HCT116 (cell line): ENCODE measurements at regions of chr1 and their contacts with region 1.

Region 1: GRCh38 chr1:55375617-55376258 is 160.6 kb upstream of the USP24 start:
- DNase-seq: peak; percentile 22
- ATAC-seq: peak; percentile 78
- H3K4me3 ChIP-seq: no peak overlapping the region
- H3K27ac ChIP-seq: no peak overlapping the region
- H3K4me1 ChIP-seq: peaks cover 0 to 20% of the 10 kb centered on the region in 2 experiments; a peak in 1 of 4 replicates
- H3K27me3 ChIP-seq: no peaks in the 10 kb centered on the region
- CTCF ChIP-seq: peak; percentile 56 to 94 (median 89); a peak in 5 of 6 replicates
- POLR2A ChIP-seq: no peak
- RAD21 ChIP-seq: peak; percentile 76

Region 2: DNA sequence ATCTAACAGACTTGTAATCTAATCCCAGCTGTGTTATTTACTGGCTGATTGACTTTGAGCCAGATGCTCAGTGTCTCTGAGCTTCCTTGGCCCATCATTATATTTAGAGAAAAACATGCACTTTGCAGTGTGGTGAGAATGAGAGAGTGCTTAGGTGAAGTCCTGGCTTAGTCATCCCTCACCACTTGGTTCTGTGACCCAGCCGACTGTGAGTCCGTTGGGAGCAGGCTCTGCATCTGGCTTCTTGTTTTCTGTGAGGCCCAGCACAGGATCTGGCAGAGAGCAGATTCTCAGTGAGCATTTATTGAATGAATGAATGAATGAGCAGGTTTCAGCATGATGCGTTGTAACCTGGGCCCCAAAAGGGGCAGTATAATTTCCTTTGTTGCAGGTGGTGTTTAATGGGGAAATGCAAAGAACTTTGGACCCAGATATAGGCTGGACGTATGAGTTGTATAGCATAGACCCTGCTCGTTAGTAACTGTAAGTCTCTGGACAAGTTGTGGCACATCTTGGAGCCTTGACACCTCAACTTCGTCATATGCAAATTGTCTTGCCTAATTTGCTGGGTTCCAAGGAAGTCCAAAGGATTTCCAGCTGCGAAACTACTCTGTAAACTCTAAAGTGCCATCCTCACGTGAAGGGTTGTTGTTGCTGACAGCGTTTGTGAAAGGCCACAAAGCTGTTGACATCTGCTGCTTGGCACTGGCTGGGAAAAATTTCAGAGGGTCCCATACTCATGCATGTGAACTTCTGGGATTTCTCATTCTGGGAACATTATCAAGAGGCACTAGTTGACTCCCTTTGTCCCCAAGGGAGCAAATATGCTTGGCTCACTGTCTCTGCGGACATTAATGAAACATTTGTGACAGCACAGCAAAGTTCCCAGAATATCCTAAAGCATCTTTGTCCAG is 21.8 kb before region 1 on chr1:
- CTCF ChIA-PET with region 1: interaction called, 10 read pairs
- POLR2A ChIA-PET with region 1: no interaction called
- RAD21 ChIA-PET with region 1: no interaction called
- intact Hi-C with region 1: no loop called
- DNase-seq: no peak
- ATAC-seq: no peak
- H3K4me3 ChIP-seq: no peak overlapping the region
- H3K27ac ChIP-seq: no peak overlapping the region
- H3K4me1 ChIP-seq: no peaks in the 10 kb centered on the region
- H3K27me3 ChIP-seq: no peaks in the 10 kb centered on the region
- CTCF ChIP-seq: no peak
- POLR2A ChIP-seq: no peak
- RAD21 ChIP-seq: no peak

Region 3: GRCh38 chr1:55428944-55429931 is 53.5 kb after region 1 on chr1:
- CTCF ChIA-PET with region 1: interaction called, 10 read pairs
- POLR2A ChIA-PET with region 1: no interaction called
- RAD21 ChIA-PET with region 1: interaction called in 1 of 2 experiments, 3 read pairs
- intact Hi-C with region 1: no loop called
- DNase-seq: peak; percentile 100
- ATAC-seq: peak; percentile 95
- H3K4me3 ChIP-seq: peak overlapping the region in 1 of 2 experiments; percentile 27; a peak in 3 of 4 replicates
- H3K27ac ChIP-seq: peak overlapping the region; percentile 51
- H3K4me1 ChIP-seq: peaks cover 22 to 64% of the 10 kb centered on the region in 2 experiments
- H3K27me3 ChIP-seq: no peaks in the 10 kb centered on the region
- CTCF ChIP-seq: no peak
- POLR2A ChIP-seq: no peak
- RAD21 ChIP-seq: peak; percentile 35; the same call in 1 of the 2 replicates

Region 4: GRCh38 chr1:55478742-55479141 is 103.0 kb after region 1 on chr1:
- CTCF ChIA-PET with region 1: interaction called, 16 read pairs
- POLR2A ChIA-PET with region 1: no interaction called
- RAD21 ChIA-PET with region 1: interaction called, 3 to 5 read pairs
- intact Hi-C with region 1: loop called (anchors 5 kb)
- DNase-seq: peak; percentile 15
- ATAC-seq: peak; percentile 62
- H3K4me3 ChIP-seq: no peak overlapping the region
- H3K27ac ChIP-seq: no peak overlapping the region
- H3K4me1 ChIP-seq: peaks cover 0 to 12% of the 10 kb centered on the region in 2 experiments; a peak in 1 of 4 replicates
- H3K27me3 ChIP-seq: no peaks in the 10 kb centered on the region
- CTCF ChIP-seq: peak in 2 of 3 experiments; percentile 53 to 54; a peak in 3 of 6 replicates
- POLR2A ChIP-seq: no peak
- RAD21 ChIP-seq: peak; percentile 66

Region 5: GRCh38 chr1:55572878-55573734 is 197.4 kb after region 1 on chr1:
- CTCF ChIA-PET with region 1: no interaction called
- POLR2A ChIA-PET with region 1: no interaction called
- RAD21 ChIA-PET with region 1: no interaction called
- intact Hi-C with region 1: no loop called
- DNase-seq: peak; percentile 16
- ATAC-seq: peak; percentile 83
- H3K4me3 ChIP-seq: no peak overlapping the region
- H3K27ac ChIP-seq: no peak overlapping the region
- H3K4me1 ChIP-seq: peaks cover 4 to 18% of the 10 kb centered on the region in 2 experiments; a peak in 3 of 4 replicates
- H3K27me3 ChIP-seq: no peaks in the 10 kb centered on the region
- CTCF ChIP-seq: no peak
- POLR2A ChIP-seq: no peak
- RAD21 ChIP-seq: no peak

Region 6: GRCh38 chr1:55604749-55605148 is 229.0 kb after region 1 on chr1:
- CTCF ChIA-PET with region 1: no interaction called
- POLR2A ChIA-PET with region 1: no interaction called
- RAD21 ChIA-PET with region 1: no interaction called
- intact Hi-C with region 1: no loop called
- DNase-seq: no peak
- ATAC-seq: no peak
- H3K4me3 ChIP-seq: no peak overlapping the region
- H3K27ac ChIP-seq: no peak overlapping the region
- H3K4me1 ChIP-seq: no peaks in the 10 kb centered on the region
- H3K27me3 ChIP-seq: no peaks in the 10 kb centered on the region
- CTCF ChIP-seq: no peak
- POLR2A ChIP-seq: no peak
- RAD21 ChIP-seq: no peak

Region 7: GRCh38 chr1:55650444-55650843 is 274.7 kb after region 1 on chr1:
- CTCF ChIA-PET with region 1: no interaction called
- POLR2A ChIA-PET with region 1: no interaction called
- RAD21 ChIA-PET with region 1: no interaction called
- intact Hi-C with region 1: no loop called
- DNase-seq: no peak
- ATAC-seq: no peak
- H3K4me3 ChIP-seq: no peak overlapping the region
- H3K27ac ChIP-seq: no peak overlapping the region
- H3K4me1 ChIP-seq: no peaks in the 10 kb centered on the region
- H3K27me3 ChIP-seq: no peaks in the 10 kb centered on the region
- CTCF ChIP-seq: no peak
- POLR2A ChIP-seq: no peak
- RAD21 ChIP-seq: no peak

Region 8: DNA sequence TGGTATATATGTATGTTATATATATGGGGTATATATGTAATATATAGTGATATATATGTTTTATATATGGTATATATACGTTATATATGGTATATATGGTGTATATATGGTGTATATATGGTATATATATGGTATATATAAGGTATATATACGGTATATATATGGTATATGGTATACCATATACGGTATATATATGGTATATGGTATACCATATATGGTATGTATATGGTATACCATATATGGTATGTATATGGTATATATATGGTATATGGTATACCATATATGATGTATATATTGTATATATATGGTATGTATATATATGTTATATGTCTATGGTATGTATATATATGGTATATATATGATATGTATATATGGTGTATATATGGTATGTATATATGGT is 287.1 kb after region 1 on chr1:
- CTCF ChIA-PET with region 1: no interaction called
- POLR2A ChIA-PET with region 1: no interaction called
- RAD21 ChIA-PET with region 1: no interaction called
- intact Hi-C with region 1: no loop called
- DNase-seq: no peak
- ATAC-seq: no peak
- H3K4me3 ChIP-seq: no peak overlapping the region
- H3K27ac ChIP-seq: no peak overlapping the region
- H3K4me1 ChIP-seq: no peaks in the 10 kb centered on the region
- H3K27me3 ChIP-seq: no peaks in the 10 kb centered on the region
- CTCF ChIP-seq: no peak
- POLR2A ChIP-seq: no peak
- RAD21 ChIP-seq: no peak

Region 9: DNA sequence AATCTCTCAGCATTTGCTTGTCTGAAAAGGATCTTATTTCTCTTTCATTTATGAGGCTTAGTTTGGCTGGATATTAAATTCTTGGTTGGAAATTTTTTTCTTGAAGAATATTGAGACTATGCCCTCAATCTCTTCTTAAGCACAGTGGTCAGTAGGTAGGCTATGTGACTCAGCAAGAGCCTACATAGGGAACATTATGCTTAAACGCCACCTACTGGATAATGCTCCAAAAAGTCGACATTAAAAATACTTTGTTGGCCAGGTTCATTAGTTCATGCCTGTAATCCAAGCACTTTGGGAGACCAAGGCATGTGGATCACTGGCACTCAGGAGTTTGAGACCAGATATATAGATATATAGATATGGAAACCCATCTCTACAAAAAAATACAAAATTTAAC is 517.4 kb after region 1 on chr1:
- CTCF ChIA-PET with region 1: no interaction called
- POLR2A ChIA-PET with region 1: no interaction called
- RAD21 ChIA-PET with region 1: no interaction called
- intact Hi-C with region 1: loop called (anchors 1 kb)
- DNase-seq: peak; percentile 53
- ATAC-seq: peak; percentile 95
- H3K4me3 ChIP-seq: no peak overlapping the region
- H3K27ac ChIP-seq: no peak overlapping the region
- H3K4me1 ChIP-seq: no peaks in the 10 kb centered on the region
- H3K27me3 ChIP-seq: no peaks in the 10 kb centered on the region
- CTCF ChIP-seq: peak; percentile 47 to 59 (median 55); a peak in 5 of 6 replicates
- POLR2A ChIP-seq: no peak
- RAD21 ChIP-seq: peak; percentile 74

Region 10: GRCh38 chr1:56584910-56585528 is 1209.3 kb after region 1 on chr1:
- CTCF ChIA-PET with region 1: interaction called, 6 read pairs
- POLR2A ChIA-PET with region 1: no interaction called
- RAD21 ChIA-PET with region 1: no interaction called
- intact Hi-C with region 1: loop called (anchors 5 kb)
- DNase-seq: peak; percentile 39
- ATAC-seq: peak; percentile 76
- H3K4me3 ChIP-seq: no peak overlapping the region
- H3K27ac ChIP-seq: no peak overlapping the region
- H3K4me1 ChIP-seq: peaks cover 0 to 5% of the 10 kb centered on the region in 2 experiments; a peak in 2 of 4 replicates
- H3K27me3 ChIP-seq: no peaks in the 10 kb centered on the region
- CTCF ChIP-seq: peak; percentile 68 to 90 (median 70); a peak in 5 of 6 replicates
- POLR2A ChIP-seq: no peak
- RAD21 ChIP-seq: peak; percentile 90